ENCODE measurements at regions of chr6 and their contacts with region 1.

Region 1: DNA sequence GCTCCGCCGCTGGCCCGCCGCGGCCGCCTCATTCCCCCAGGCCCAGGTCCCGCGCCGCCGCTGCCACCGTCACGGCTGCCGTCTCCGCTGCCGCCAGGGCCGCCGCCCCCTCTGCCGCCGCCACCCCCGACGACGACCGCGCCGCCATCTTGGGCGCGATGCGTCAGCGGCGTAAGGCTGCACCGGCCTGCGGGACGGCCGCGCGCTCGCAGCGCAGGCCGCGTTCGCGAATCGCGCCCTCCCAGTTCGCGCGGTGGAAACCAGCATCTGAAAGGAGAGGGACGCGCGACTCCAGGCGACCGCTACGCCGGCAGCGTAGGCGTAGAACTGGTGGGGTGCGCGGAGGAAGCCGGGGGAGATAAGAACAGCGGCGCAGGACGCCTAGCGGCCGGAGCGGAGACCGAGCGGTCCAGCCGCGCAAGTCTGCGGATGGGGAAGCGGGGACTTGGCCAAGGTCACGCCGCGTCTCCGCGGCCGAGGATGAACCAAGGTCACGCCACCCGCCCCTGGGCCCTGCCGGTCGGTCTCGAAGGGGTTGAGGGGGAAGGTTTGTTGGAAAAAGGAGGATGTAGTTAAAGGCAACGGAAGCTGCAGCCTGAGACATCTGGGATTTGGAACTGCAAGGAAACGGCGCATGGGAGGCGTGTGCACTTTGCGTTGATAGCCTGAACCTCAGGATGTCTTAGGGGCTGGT is at the start of gene NUDT3:
- DNase-seq: peak; percentile 95 to 98 (median 96)
- ATAC-seq: peak; percentile 85 to 95 (median 92)
- H3K4me3 ChIP-seq: peak within 1 kb of the TSS; percentile 59 to 98 (median 91)
- H3K27ac ChIP-seq: peak within 1 kb of the TSS; percentile 88 to 99 (median 97)
- H3K4me1 ChIP-seq: peaks cover 0 to 48% (median 35%) of the 10 kb centered on the region in 12 donors
- H3K27me3 ChIP-seq: no peaks in the 10 kb centered on the region
- CTCF ChIP-seq: peak; percentile 70 to 95 (median 84)
- POLR2A ChIP-seq: peak in 1 of 2 donors; percentile 66
- total RNA-seq, gene NUDT3: 29.6 to 68.4 (median 54.9) TPM

Region 2: GRCh38 chr6:34248727-34249551 is 143.7 kb before region 1 on chr6 and contains the start of gene SMIM29:
- intact Hi-C with region 1: loop called in 9 of 10 experiments (anchors 1 to 5 kb)
- DNase-seq: peak; percentile 97 to 99 (median 97)
- ATAC-seq: peak; percentile 90 to 96 (median 93)
- H3K4me3 ChIP-seq: peak within 1 kb of the TSS; percentile 46 to 96 (median 88)
- H3K27ac ChIP-seq: peak within 1 kb of the TSS; percentile 80 to 96 (median 94)
- H3K4me1 ChIP-seq: peaks cover 0 to 38% (median 26%) of the 10 kb centered on the region in 12 donors
- H3K27me3 ChIP-seq: no peaks in the 10 kb centered on the region
- CTCF ChIP-seq: peak; percentile 86 to 100 (median 97)
- POLR2A ChIP-seq: peak; percentile 24 to 84
- total RNA-seq, gene SMIM29: 18.4 to 37.4 (median 22.6) TPM

Region 3: GRCh38 chr6:34284563-34285447 is 107.8 kb before region 1 on chr6:
- intact Hi-C with region 1: loop called in 1 of 10 experiments (anchors 10 kb)
- DNase-seq: peak; percentile 71 to 86 (median 79)
- ATAC-seq: peak; percentile 76 to 91 (median 86)
- H3K4me3 ChIP-seq: no peak overlapping the region
- H3K27ac ChIP-seq: peak overlapping the region in 11 of 12 donors; percentile 5 to 89 (median 45)
- H3K4me1 ChIP-seq: peaks cover 9 to 82% (median 57%) of the 10 kb centered on the region in 12 donors
- H3K27me3 ChIP-seq: no peaks in the 10 kb centered on the region
- CTCF ChIP-seq: no peak
- POLR2A ChIP-seq: no peak

Region 4: GRCh38 chr6:34301408-34301807 is 91.2 kb before region 1 on chr6:
- intact Hi-C with region 1: loop called in 3 of 10 experiments (anchors 5 kb)
- DNase-seq: peak in 4 of 5 donors; percentile 85 to 89 (median 86)
- ATAC-seq: peak; percentile 87 to 97 (median 94)
- H3K4me3 ChIP-seq: no peak overlapping the region
- H3K27ac ChIP-seq: peak overlapping the region; percentile 6 to 84 (median 68)
- H3K4me1 ChIP-seq: peaks cover 13 to 85% (median 63%) of the 10 kb centered on the region in 12 donors
- H3K27me3 ChIP-seq: no peaks in the 10 kb centered on the region
- CTCF ChIP-seq: no peak
- POLR2A ChIP-seq: no peak

Region 5: DNA sequence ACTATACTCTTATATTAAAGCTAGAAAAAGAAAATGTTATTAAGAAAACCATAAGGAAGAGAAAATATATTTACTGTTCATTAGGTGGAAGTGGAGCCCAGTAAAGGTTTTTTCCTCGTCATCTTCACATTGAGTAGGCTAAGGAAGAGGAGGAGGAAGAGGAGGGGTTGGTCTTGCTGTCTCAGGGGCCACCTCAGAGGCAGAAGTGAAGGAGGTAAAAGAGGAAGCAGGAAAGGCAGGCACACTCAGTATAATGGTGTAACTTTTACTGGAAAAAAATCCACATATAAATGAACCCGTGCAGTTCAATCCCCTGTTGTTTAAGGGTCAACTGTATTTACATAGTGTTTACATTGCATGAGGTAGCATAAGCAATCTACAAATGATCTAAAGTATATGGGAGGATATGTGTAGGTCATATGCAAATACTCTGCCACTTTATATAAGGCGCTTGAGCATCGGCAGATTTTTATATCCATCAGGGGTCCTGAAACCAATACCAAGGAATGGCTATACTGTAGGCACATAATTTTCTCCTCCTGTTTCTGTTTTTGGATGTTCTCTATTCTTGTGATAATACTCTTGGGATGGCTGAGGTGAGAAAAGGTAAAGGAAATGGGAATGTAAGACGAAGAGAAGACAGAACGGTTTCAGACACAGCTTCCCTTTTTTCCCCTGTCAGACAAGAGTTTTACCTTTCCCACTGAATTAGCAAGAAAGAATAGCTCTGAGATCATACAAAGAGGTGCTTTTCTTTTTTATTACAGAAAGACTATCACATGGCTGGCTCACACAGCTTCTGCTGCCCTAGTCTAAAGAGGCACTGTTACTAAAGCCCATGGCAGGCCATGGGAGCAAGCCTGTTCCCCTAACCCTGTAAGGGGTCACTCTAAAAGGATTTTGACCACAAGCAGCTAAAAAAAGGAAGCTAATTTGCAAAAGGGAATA is 60.1 kb before region 1 on chr6:
- intact Hi-C with region 1: loop called in 2 of 10 experiments (anchors 5 to 10 kb)
- DNase-seq: no peak
- ATAC-seq: peak in 1 of 4 donors; percentile 30
- H3K4me3 ChIP-seq: no peak overlapping the region
- H3K27ac ChIP-seq: peak overlapping the region in 11 of 12 donors; percentile 31 to 84 (median 74)
- H3K4me1 ChIP-seq: peaks cover 6 to 54% (median 38%) of the 10 kb centered on the region in 12 donors
- H3K27me3 ChIP-seq: no peaks in the 10 kb centered on the region
- CTCF ChIP-seq: no peak
- POLR2A ChIP-seq: no peak

Region 6: DNA sequence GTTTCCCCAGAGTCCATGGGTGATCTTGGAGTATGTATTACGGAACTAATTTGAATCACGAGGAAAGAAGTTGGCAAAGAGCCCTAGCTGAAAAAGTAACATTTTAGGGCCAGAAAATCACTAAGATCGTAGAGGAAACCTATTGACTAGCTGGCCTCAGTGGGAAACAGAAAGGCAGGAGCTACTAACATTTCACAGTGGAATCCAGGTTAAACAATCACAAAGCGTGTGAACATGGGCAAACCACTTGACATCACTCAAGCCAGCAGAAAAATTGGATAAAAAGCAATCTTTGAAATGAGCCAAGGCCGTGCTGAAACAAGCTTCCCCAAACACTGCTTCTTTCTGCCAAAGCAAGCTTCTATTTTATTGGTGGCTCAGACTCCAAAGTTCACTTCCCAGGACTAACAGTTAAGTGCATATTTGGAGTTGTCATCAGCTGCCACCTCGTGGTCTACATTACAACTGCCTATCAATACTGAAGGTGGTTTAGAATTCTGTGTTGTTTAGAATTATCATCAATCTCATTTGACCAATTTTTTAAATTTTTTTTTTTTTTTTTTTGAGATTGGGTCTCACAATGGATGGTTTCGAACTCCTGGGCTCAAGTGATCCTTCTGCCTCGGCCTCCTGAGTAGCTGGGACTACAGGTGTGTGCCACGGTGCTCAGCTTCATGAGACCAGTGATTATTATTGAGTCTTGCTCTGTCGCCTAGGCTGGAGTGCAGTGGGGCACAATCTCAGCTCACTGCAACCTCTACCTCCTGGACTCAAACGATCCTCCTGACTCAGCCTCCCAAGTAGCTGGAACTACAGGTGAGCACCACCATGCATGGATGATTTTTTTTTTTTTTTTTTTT is 22.6 kb after region 1 on chr6:
- intact Hi-C with region 1: loop called in 1 of 10 experiments (anchors 2 kb)
- DNase-seq: peak in 4 of 5 donors; percentile 48 to 67 (median 61)
- ATAC-seq: peak; percentile 85 to 94 (median 92)
- H3K4me3 ChIP-seq: peak overlapping the region in 1 of 12 donors; percentile 16
- H3K27ac ChIP-seq: peak overlapping the region in 9 of 12 donors; percentile 16 to 78 (median 55)
- H3K4me1 ChIP-seq: peaks cover 0 to 11% (median 8%) of the 10 kb centered on the region in 12 donors
- H3K27me3 ChIP-seq: no peaks in the 10 kb centered on the region
- CTCF ChIP-seq: peak; percentile 64 to 87 (median 80)
- POLR2A ChIP-seq: no peak

Measured in heart left ventricle (tissue), 16 donors.